Naive thymus-derived CD4-positive, alpha-beta T cell (primary cell): ENCODE measurements at regions of chr4 and their contacts with region 1.

Region 1: GRCh38 chr4:48692897-48693296 is 87.2 kb downstream of the FRYL start:
- DNase-seq: no peak
- ATAC-seq: no peak
- H3K4me3 ChIP-seq: no peak overlapping the region
- H3K4me3 Mint-ChIP-seq: peak overlapping the region in 1 of 10 donors; percentile 54
- H3K27ac ChIP-seq: no peak overlapping the region
- H3K27ac Mint-ChIP-seq: peak overlapping the region in 1 of 9 donors; percentile 55
- H3K4me1 ChIP-seq: peaks cover 0 to 8% of the 10 kb centered on the region in 2 donors
- H3K4me1 Mint-ChIP-seq: peaks cover 10 to 85% (median 71%) of the 10 kb centered on the region in 7 donors
- H3K27me3 ChIP-seq: no peaks in the 10 kb centered on the region
- H3K27me3 Mint-ChIP-seq: no peaks in the 10 kb centered on the region

Region 2: GRCh38 chr4:47974566-47974965 is 718.3 kb before region 1 on chr4:
- CTCF ChIA-PET with region 1: no interaction called
- POLR2A ChIA-PET with region 1: no interaction called
- intact Hi-C with region 1: no loop called
- DNase-seq: no peak
- ATAC-seq: no peak
- H3K4me3 ChIP-seq: no peak overlapping the region
- H3K4me3 Mint-ChIP-seq: no peak overlapping the region
- H3K27ac ChIP-seq: no peak overlapping the region
- H3K27ac Mint-ChIP-seq: no peak overlapping the region
- H3K4me1 ChIP-seq: no peaks in the 10 kb centered on the region
- H3K4me1 Mint-ChIP-seq: no peaks in the 10 kb centered on the region
- H3K27me3 ChIP-seq: no peaks in the 10 kb centered on the region
- H3K27me3 Mint-ChIP-seq: peaks cover 0 to 10% (median 0%) of the 10 kb centered on the region in 5 donors

Region 3: GRCh38 chr4:48739560-48740019 is 46.7 kb after region 1 on chr4:
- CTCF ChIA-PET with region 1: no interaction called
- POLR2A ChIA-PET with region 1: no interaction called
- intact Hi-C with region 1: loop called in 1 of 2 experiments (anchors 5 kb)
- DNase-seq: no peak
- ATAC-seq: peak; percentile 58
- H3K4me3 ChIP-seq: no peak overlapping the region
- H3K4me3 Mint-ChIP-seq: peak overlapping the region in 7 of 10 donors; percentile 16 to 63 (median 43)
- H3K27ac ChIP-seq: peak overlapping the region; percentile 23
- H3K27ac Mint-ChIP-seq: peak overlapping the region in 7 of 9 donors; percentile 51 to 69 (median 55)
- H3K4me1 ChIP-seq: peaks cover 24 to 31% of the 10 kb centered on the region in 2 donors
- H3K4me1 Mint-ChIP-seq: peaks cover 45 to 88% (median 78%) of the 10 kb centered on the region in 7 donors
- H3K27me3 ChIP-seq: no peaks in the 10 kb centered on the region
- H3K27me3 Mint-ChIP-seq: no peaks in the 10 kb centered on the region